Common myeloid progenitor, CD34-positive (primary cell): ENCODE measurements at regions of chr10 and their contacts with region 1.

Region 1: DNA sequence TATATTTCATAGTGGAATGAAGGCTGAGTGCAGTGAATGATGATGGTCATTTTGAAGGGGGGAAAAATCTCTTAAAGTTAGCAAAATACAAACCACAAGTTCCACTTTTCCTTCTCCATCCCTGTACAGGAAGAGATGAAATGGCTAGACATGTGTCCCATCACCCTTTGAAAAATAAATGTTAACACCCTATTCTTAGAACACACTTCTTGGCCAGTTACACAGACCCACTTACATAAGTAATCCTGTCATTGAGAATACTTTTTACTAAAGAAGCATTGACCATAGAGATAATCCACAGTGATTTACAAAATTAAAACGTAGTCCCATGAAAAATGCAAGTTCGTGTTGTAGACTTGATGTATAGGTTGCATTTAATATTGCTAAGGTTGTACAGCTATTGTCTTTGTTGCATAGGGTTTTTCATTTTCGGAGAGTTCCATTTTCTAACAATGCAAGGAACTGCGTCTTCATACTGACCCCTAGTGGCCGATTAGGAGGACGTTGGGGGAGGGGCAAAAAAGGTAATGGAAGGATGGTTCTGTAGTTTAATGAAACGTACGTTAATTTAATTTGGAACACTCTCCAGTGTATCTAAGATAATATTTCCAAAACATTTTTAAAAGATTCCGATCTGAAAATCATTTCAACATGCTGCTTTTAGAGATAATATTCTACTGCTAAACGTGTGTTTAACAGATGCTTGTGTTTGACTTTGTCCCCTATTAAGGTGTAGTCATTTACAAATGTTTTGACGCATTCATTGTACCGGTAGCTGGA is 60.9 kb downstream of the ARMC3 start:
- DNase-seq: peak; percentile 71 to 78 (median 72)
- H3K4me3 ChIP-seq: peak overlapping the region in 1 of 7 experiments; percentile 25
- H3K27ac ChIP-seq: no peak overlapping the region
- H3K4me1 ChIP-seq: peaks cover 0 to 6% (median 3%) of the 10 kb centered on the region in 4 experiments
- H3K27me3 ChIP-seq: peaks cover 0 to 2% (median 0%) of the 10 kb centered on the region in 5 experiments

Region 2: DNA sequence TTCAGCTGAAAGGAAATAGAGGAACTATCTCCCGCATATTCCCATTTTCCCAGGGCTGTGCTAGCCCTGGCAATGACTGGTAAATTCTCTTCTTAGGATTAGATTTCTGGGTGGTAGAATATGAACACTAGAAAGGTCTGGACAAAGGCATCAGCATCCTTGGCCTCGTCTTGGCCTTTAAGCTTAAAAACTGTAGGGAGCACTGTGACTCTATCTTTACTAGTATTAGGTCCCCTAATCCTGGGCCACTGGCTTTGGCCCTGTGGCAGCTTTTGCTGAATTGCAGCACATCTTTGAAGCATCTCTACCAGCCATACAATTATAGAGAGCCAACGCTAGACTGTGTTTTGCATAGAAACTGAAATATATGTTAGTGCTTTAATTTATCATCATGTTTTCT is 729.5 kb before region 1 on chr10:
- CTCF ChIA-PET with region 1: interaction called, 24 read pairs
- POLR2A ChIA-PET with region 1: no interaction called
- DNase-seq: peak in 2 of 3 donors; percentile 78 to 79
- H3K4me3 ChIP-seq: no peak overlapping the region
- H3K27ac ChIP-seq: no peak overlapping the region
- H3K4me1 ChIP-seq: peaks cover 0 to 43% (median 14%) of the 10 kb centered on the region in 4 experiments
- H3K27me3 ChIP-seq: no peaks in the 10 kb centered on the region

Region 3: GRCh38 chr10:22550732-22551131 is 438.0 kb before region 1 on chr10:
- CTCF ChIA-PET with region 1: interaction called, 29 read pairs
- POLR2A ChIA-PET with region 1: no interaction called
- DNase-seq: peak; percentile 76 to 84 (median 79)
- H3K4me3 ChIP-seq: no peak overlapping the region
- H3K27ac ChIP-seq: no peak overlapping the region
- H3K4me1 ChIP-seq: peaks cover 0 to 2% (median 0%) of the 10 kb centered on the region in 4 experiments
- H3K27me3 ChIP-seq: no peaks in the 10 kb centered on the region

Region 4: GRCh38 chr10:22573820-22574569 is 414.8 kb before region 1 on chr10:
- CTCF ChIA-PET with region 1: interaction called, 30 read pairs
- POLR2A ChIA-PET with region 1: no interaction called
- DNase-seq: peak; percentile 32 to 45 (median 36)
- H3K4me3 ChIP-seq: no peak overlapping the region
- H3K27ac ChIP-seq: no peak overlapping the region
- H3K4me1 ChIP-seq: peaks cover 0 to 7% (median 3%) of the 10 kb centered on the region in 4 experiments
- H3K27me3 ChIP-seq: no peaks in the 10 kb centered on the region

Region 5: DNA sequence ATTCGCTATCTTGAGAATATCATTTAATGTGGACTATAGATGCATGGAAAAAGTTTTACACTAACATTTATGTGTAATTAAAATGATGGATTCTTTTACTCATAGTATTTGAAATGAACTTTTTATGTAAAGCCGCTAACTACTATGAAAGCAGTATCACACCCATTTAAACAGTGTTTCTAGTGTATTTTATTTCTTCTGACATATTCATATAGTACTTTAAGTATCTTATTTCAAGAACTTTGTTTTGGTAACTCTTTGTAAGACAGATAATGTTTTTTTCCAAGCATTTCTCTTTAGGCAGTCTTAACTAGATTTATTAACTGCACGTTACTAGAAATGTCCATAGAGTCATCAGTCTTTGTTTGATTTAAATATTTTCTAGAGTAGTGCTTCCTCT is 73.5 kb before region 1 on chr10:
- CTCF ChIA-PET with region 1: no interaction called
- POLR2A ChIA-PET with region 1: no interaction called
- DNase-seq: no peak
- H3K4me3 ChIP-seq: no peak overlapping the region
- H3K27ac ChIP-seq: no peak overlapping the region
- H3K4me1 ChIP-seq: no peaks in the 10 kb centered on the region
- H3K27me3 ChIP-seq: no peaks in the 10 kb centered on the region

Region 6: GRCh38 chr10:22962817-22963216 is 26.0 kb before region 1 on chr10:
- CTCF ChIA-PET with region 1: no interaction called
- POLR2A ChIA-PET with region 1: no interaction called
- DNase-seq: no peak
- H3K4me3 ChIP-seq: no peak overlapping the region
- H3K27ac ChIP-seq: no peak overlapping the region
- H3K4me1 ChIP-seq: no peaks in the 10 kb centered on the region
- H3K27me3 ChIP-seq: no peaks in the 10 kb centered on the region